ENCODE measurements at regions of chr3 and their contacts with region 1.

Region 1: DNA sequence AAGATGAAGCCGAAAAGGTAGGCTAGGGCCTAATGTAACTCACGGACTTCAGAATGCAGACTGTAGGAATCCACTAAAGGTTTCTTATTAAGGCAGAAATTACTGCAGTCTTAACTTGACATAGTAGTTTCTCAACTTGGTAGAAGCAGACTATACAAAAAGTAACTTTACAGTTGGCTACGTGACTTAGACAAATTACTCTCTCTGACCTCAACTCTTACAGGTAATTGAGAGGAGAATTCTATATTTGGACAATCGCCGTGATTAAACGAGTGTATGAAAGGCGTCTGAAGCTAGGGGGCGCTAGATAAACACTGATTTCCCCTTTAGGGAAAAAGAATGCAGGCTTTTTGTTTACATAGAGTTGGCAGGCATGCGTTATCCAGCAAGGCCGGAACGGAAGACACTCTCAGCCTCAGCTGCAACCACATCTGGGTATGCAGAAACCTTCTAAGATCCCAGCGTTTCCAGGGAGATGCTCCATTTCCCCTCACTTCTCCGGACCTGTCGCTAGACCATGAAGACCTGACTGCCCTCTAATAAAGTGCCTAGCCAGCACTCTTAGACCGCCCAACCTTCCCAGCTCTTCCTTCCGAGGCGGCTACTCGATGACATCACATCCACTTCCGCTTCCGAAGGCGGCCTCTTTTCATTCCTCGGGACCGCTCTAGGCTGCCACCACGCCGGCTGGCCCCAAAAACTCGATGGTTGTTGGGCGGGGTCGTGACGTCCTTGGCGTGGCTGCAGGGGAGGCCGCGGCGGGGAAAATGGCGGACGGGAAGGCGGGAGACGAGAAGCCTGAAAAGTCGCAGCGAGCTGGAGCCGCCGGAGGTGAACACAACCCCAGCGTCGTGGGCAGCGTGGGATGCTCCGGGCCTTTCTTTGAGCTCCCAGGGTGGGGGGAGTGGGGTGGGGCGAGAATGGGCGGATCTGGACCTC is at the start of gene PCNP:
- DNase-seq: peak; percentile 97 to 100 (median 99)
- ATAC-seq: peak; percentile 82 to 90 (median 84)
- H3K4me3 ChIP-seq: peak within 1 kb of the TSS; percentile 85 to 90
- H3K4me3 Mint-ChIP-seq: peak within 1 kb of the TSS; percentile 86 to 96 (median 94)
- H3K27ac ChIP-seq: peak within 1 kb of the TSS; percentile 97
- H3K27ac Mint-ChIP-seq: peak within 1 kb of the TSS; percentile 96
- H3K4me1 ChIP-seq: peaks cover 28 to 37% of the 10 kb centered on the region in 2 experiments
- H3K4me1 Mint-ChIP-seq: peaks cover 65 to 74% (median 72%) of the 10 kb centered on the region in 3 donors
- H3K27me3 ChIP-seq: no peaks in the 10 kb centered on the region
- H3K27me3 Mint-ChIP-seq: no peaks in the 10 kb centered on the region
- total RNA-seq, gene PCNP: 126 to 158 (median 151) TPM

Region 2: DNA sequence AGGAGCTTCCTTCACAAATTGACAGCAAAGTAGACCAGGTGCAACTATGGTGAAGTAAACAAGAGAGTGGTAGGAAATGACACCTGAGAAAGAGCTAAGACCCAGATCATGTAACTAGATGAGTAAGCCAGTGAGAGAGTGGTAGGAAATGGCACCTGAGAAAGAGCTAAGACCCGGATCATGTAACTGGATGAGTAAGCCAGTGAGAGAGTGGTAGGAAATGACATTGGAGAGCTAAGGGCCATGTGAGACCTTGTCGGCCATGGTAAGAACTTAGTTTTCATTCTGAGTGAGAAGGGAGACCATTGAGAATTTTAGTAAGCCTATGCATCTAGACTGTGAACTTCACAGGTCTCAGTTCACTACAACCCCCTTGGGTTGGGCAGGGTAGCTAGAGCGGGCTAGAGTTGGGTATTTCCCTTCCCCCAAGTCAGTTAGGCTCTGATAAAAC is 55.3 kb before region 1 on chr3:
- CTCF ChIA-PET with region 1: interaction called, 4 to 8 read pairs
- POLR2A ChIA-PET with region 1: interaction called, 5 to 23 read pairs
- DNase-seq: peak in 33 of 35 experiments; percentile 6 to 82 (median 31)
- ATAC-seq: peak; percentile 88 to 93 (median 90)
- H3K4me3 ChIP-seq: no peak overlapping the region
- H3K4me3 Mint-ChIP-seq: peak overlapping the region; percentile 31 to 55 (median 42)
- H3K27ac ChIP-seq: peak overlapping the region; percentile 97
- H3K27ac Mint-ChIP-seq: peak overlapping the region; percentile 95 to 96
- H3K4me1 ChIP-seq: peaks cover 42 to 63% of the 10 kb centered on the region in 2 experiments
- H3K4me1 Mint-ChIP-seq: peaks cover 65 to 71% (median 70%) of the 10 kb centered on the region in 3 donors
- H3K27me3 ChIP-seq: no peaks in the 10 kb centered on the region
- H3K27me3 Mint-ChIP-seq: no peaks in the 10 kb centered on the region

Region 3: DNA sequence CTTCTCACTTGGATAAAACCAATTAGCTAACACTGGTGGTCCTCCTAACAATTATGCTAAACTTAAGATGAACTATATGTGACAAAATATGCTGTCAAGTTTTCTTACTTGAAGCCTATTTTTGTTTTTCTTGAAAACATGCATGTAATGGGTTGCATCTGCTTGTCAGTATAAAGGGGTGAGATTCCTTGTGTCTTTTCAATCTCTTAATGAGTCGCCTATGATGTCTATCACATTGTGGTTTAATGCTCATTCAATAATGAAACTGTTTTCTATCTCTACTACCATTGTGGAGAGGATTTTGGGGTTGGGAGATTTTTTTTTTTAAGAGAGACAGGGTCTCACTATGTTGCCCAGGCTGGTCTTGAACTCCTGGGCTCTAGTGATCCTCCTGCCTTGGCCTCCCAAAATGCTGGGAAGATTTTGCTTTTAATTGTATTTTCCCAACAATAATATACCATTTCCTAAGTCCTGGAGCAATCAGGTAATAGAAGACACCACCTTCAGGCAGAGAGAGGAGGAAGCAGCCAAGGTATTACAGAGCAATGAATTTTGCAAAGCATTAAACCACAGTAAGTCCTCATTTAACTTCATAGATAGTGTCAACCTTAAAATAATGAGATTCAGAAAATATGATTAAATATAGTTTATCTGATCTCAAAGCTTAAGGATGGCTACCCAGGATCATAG is 29.4 kb before region 1 on chr3:
- CTCF ChIA-PET with region 1: interaction called in 1 of 2 experiments, 3 read pairs
- POLR2A ChIA-PET with region 1: interaction called in 1 of 2 experiments, 11 read pairs
- DNase-seq: peak in 1 of 35 experiments; percentile 22
- ATAC-seq: peak in 1 of 4 experiments; percentile 55
- H3K4me3 ChIP-seq: no peak overlapping the region
- H3K4me3 Mint-ChIP-seq: peak overlapping the region in 1 of 3 donors; percentile 55
- H3K27ac ChIP-seq: peak overlapping the region; percentile 67
- H3K27ac Mint-ChIP-seq: peak overlapping the region; percentile 88 to 93
- H3K4me1 ChIP-seq: peaks cover 15 to 20% of the 10 kb centered on the region in 2 experiments
- H3K4me1 Mint-ChIP-seq: peaks cover 38 to 44% (median 43%) of the 10 kb centered on the region in 3 donors
- H3K27me3 ChIP-seq: no peaks in the 10 kb centered on the region
- H3K27me3 Mint-ChIP-seq: no peaks in the 10 kb centered on the region

Region 4: GRCh38 chr3:101561630-101562328 is 11.9 kb before region 1 on chr3 and contains the start of gene TRMT10C:
- CTCF ChIA-PET with region 1: interaction called in 1 of 2 experiments, 14 read pairs
- POLR2A ChIA-PET with region 1: interaction called, 7 to 16 read pairs
- DNase-seq: peak; percentile 81 to 96 (median 92)
- ATAC-seq: peak; percentile 95 to 98 (median 97)
- H3K4me3 ChIP-seq: peak within 1 kb of the TSS; percentile 78 to 96
- H3K4me3 Mint-ChIP-seq: peak within 1 kb of the TSS; percentile 92 to 98 (median 97)
- H3K27ac ChIP-seq: peak within 1 kb of the TSS; percentile 86
- H3K27ac Mint-ChIP-seq: peak within 1 kb of the TSS; percentile 95 to 96
- H3K4me1 ChIP-seq: peaks cover 12 to 13% of the 10 kb centered on the region in 2 experiments
- H3K4me1 Mint-ChIP-seq: peaks cover 34 to 37% (median 34%) of the 10 kb centered on the region in 3 donors
- H3K27me3 ChIP-seq: peaks cover 0 to 4% of the 10 kb centered on the region in 2 experiments
- H3K27me3 Mint-ChIP-seq: peaks cover 2 to 6% of the 10 kb centered on the region in 2 donors
- total RNA-seq, gene TRMT10C: 21.4 to 33.3 (median 22.2) TPM

Region 5: GRCh38 chr3:101676765-101677435 is 103.2 kb after region 1 on chr3 and contains the start of gene ZBTB11:
- CTCF ChIA-PET with region 1: interaction called in 1 of 2 experiments, 13 read pairs
- POLR2A ChIA-PET with region 1: interaction called, 4 to 13 read pairs
- DNase-seq: peak; percentile 98 to 100 (median 100)
- ATAC-seq: peak; percentile 72 to 75 (median 72)
- H3K4me3 ChIP-seq: peak within 1 kb of the TSS; percentile 89 to 97
- H3K4me3 Mint-ChIP-seq: peak within 1 kb of the TSS; percentile 91 to 98 (median 95)
- H3K27ac ChIP-seq: peak within 1 kb of the TSS; percentile 98
- H3K27ac Mint-ChIP-seq: peak within 1 kb of the TSS; percentile 97 to 99
- H3K4me1 ChIP-seq: peaks cover 24 to 32% of the 10 kb centered on the region in 2 experiments
- H3K4me1 Mint-ChIP-seq: peaks cover 58 to 59% (median 58%) of the 10 kb centered on the region in 3 donors
- H3K27me3 ChIP-seq: no peaks in the 10 kb centered on the region
- H3K27me3 Mint-ChIP-seq: no peaks in the 10 kb centered on the region
- total RNA-seq, gene ZBTB11: 38.7 to 61.4 (median 45.6) TPM

Region 6: DNA sequence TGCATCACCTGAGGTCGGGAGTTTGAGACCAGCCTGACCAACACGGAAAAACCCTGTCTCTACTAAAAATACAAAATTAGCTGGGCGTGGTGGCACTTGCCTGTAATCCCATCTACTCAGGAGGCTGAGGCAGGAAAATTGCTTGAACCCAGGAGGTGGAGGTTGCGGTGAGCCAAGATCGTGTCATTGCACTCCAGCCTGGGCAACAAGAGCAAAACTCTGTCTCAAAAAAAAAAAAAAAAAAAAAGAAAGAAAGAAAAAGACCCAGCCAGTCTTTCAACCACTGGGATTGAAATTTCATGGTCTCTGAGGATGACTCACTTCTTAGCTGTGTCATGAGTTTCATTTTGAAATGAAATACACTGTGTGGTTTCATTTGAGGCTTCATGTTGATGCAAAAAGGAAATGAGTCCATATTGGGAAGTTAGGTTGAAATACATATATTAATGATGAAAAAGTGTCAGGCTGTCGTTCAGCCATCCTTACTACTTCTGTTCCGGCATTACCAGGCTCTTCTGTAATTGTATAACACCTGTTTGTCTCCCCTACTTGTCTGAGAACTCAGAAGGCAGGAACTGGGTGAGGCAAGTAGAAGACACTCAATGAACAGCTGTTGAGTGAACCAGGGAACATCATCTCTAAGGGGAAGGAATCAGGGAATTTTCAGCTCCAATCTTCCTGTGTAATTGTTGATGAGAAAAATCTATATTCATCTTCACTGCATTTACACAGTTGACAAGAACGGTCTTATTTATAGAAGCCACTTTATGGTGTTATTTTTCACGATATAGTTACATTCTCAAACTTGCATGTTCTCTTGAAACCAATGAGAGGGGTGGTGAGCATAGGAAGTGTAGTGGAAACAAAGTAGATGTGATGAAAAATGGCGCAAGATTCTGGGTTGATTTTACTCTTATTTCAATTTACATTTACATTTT is 363.0 kb after region 1 on chr3:
- CTCF ChIA-PET with region 1: no interaction called
- POLR2A ChIA-PET with region 1: interaction called in 1 of 2 experiments, 13 read pairs
- DNase-seq: peak in 10 of 35 experiments; percentile 3 to 73 (median 12)
- ATAC-seq: peak; percentile 92 to 95 (median 94)
- H3K4me3 ChIP-seq: peak overlapping the region in 1 of 2 donors; percentile 16
- H3K4me3 Mint-ChIP-seq: peak overlapping the region; percentile 45 to 69 (median 55)
- H3K27ac ChIP-seq: peak overlapping the region; percentile 40
- H3K27ac Mint-ChIP-seq: peak overlapping the region; percentile 83 to 91
- H3K4me1 ChIP-seq: peaks cover 10 to 37% of the 10 kb centered on the region in 2 experiments
- H3K4me1 Mint-ChIP-seq: peaks cover 27 to 30% (median 29%) of the 10 kb centered on the region in 3 donors
- H3K27me3 ChIP-seq: no peaks in the 10 kb centered on the region
- H3K27me3 Mint-ChIP-seq: no peaks in the 10 kb centered on the region